A673 (cell line): ENCODE measurements at regions of chr2 and their contacts with region 1.

Region 1: GRCh38 chr2:11778923-11779757 is 32.7 kb downstream of the LPIN1 start:
- DNase-seq: peak; percentile 88
- H3K4me3 ChIP-seq: no peak overlapping the region
- H3K27ac ChIP-seq: no peak overlapping the region
- H3K4me1 ChIP-seq: peaks cover 12% of the 10 kb centered on the region
- H3K27me3 ChIP-seq: no peaks in the 10 kb centered on the region
- CTCF ChIP-seq: peak; percentile 95

Region 2: GRCh38 chr2:11310212-11310611 is 468.9 kb before region 1 on chr2:
- CTCF ChIA-PET with region 1: no interaction called
- POLR2A ChIA-PET with region 1: interaction called, 11 read pairs
- intact Hi-C with region 1: no loop called
- DNase-seq: no peak
- H3K4me3 ChIP-seq: no peak overlapping the region
- H3K27ac ChIP-seq: no peak overlapping the region
- H3K4me1 ChIP-seq: peaks cover 26% of the 10 kb centered on the region
- H3K27me3 ChIP-seq: no peaks in the 10 kb centered on the region
- CTCF ChIP-seq: no peak

Region 3: GRCh38 chr2:11477994-11478393 is 301.1 kb before region 1 on chr2:
- CTCF ChIA-PET with region 1: no interaction called
- POLR2A ChIA-PET with region 1: no interaction called
- intact Hi-C with region 1: loop called (anchors 5 kb)
- DNase-seq: peak; percentile 86
- H3K4me3 ChIP-seq: no peak overlapping the region
- H3K27ac ChIP-seq: no peak overlapping the region
- H3K4me1 ChIP-seq: peaks cover 4% of the 10 kb centered on the region
- H3K27me3 ChIP-seq: peaks cover 5% of the 10 kb centered on the region
- CTCF ChIP-seq: peak; percentile 89

Region 4: DNA sequence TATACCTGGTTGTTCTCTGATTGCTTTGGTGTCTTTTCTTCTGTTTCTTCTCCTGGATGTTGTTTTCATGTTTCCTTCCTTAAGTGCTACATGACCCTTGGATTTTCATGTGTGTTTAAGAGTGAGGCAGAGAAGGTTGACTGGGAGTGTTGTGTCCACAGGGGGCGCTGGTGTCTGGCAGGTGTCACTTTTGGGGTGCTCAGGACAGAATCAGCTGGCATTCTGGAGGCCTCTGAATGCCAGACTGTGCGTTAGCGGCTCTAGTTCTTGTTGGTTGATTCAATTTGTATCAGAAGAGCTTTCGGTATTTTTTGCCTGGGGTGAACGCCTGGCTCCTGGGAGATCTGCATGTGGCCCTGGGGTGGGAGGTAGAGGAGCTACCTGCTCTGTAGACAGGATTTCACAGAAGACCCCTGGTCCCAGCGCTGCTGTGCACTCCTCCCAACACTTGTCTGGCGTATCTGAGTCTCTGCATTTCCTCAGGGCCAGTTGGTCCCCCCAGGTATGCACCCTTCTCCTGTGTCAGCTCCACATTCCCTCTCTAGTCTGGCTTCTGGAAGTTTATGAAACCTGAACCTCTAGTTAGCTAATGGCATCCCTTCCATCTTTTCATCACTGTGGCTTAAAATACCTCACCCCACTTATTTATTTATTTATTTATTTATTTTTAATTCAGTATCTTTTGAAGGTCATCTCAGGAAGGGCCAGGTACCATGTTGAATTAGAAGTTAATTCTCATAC is 244.2 kb before region 1 on chr2:
- CTCF ChIA-PET with region 1: no interaction called
- POLR2A ChIA-PET with region 1: no interaction called
- intact Hi-C with region 1: no loop called
- DNase-seq: no peak
- H3K4me3 ChIP-seq: no peak overlapping the region
- H3K27ac ChIP-seq: no peak overlapping the region
- H3K4me1 ChIP-seq: no peaks in the 10 kb centered on the region
- H3K27me3 ChIP-seq: no peaks in the 10 kb centered on the region
- CTCF ChIP-seq: peak; percentile 58

Region 5: DNA sequence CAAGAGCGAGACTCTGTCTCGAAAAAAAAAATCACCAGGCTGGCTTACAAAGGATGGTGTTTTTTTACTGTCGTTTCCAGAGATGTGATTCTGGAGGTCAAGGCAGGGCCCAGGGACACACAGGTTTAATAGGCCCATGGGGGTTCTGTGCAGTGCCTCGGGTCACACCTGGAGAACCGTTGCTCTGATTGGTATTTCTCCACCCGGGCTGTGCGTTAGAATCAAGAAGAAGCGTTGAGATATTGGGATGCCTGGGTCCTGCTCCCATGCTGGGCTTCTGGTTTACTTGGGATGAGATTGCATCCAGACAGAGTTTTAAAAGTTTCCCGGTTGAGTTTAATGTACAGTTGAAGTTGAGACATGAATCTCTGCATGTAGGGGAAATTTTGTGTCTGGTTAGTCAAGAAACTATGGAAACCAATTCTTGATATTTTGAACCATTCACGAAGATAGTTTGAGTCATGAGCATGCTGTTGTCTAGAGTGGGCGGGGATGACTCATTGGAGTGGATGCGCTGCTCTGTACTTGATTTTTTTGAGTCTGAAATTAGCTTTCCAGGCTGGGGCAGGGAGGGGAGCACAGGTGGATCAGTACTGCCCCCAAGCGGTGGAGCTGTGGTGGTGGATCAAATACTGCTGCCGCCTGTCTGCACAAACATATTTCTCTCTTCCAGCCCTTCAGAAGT is 195.2 kb before region 1 on chr2:
- CTCF ChIA-PET with region 1: no interaction called
- POLR2A ChIA-PET with region 1: no interaction called
- intact Hi-C with region 1: loop called (anchors 1 kb)
- DNase-seq: peak; percentile 93
- H3K4me3 ChIP-seq: no peak overlapping the region
- H3K27ac ChIP-seq: no peak overlapping the region
- H3K4me1 ChIP-seq: peaks cover 13% of the 10 kb centered on the region
- H3K27me3 ChIP-seq: no peaks in the 10 kb centered on the region
- CTCF ChIP-seq: peak; percentile 94

Region 6: GRCh38 chr2:11688222-11689069 is 90.7 kb before region 1 on chr2:
- CTCF ChIA-PET with region 1: interaction called, 9 read pairs
- POLR2A ChIA-PET with region 1: no interaction called
- intact Hi-C with region 1: loop called (anchors 2 kb)
- DNase-seq: peak; percentile 90
- H3K4me3 ChIP-seq: peak overlapping the region; percentile 25
- H3K27ac ChIP-seq: no peak overlapping the region
- H3K4me1 ChIP-seq: peaks cover 6% of the 10 kb centered on the region
- H3K27me3 ChIP-seq: peaks cover 14% of the 10 kb centered on the region
- CTCF ChIP-seq: peak; percentile 97

Region 7: DNA sequence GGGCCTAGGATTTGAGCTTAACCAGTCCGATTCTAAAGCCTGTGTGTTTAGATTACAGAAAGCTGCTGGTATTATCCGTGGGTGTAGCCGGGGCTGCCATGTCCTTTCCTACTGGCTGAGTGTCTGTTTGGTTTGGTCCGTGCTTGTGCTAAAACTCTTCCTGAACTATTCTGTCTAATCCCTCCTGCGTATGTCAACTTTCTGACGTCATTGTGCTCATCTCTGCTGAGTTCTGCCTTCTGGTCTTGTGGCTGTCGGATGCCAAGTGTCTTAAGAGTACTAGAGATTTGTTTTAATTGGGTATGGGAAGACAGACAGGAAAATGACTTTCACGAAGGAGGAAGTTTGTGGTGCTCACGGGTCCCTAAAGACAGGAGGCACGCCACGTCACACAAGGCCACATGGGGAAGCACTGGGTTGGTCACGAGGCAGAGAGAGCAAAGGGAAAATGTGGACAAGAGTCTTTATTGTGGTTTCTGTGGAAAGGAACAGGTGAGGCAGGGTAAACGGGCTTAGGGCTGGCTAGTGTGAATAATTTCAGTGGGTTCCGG is 77.3 kb before region 1 on chr2:
- CTCF ChIA-PET with region 1: no interaction called
- POLR2A ChIA-PET with region 1: no interaction called
- intact Hi-C with region 1: no loop called
- DNase-seq: no peak
- H3K4me3 ChIP-seq: no peak overlapping the region
- H3K27ac ChIP-seq: no peak overlapping the region
- H3K4me1 ChIP-seq: no peaks in the 10 kb centered on the region
- H3K27me3 ChIP-seq: no peaks in the 10 kb centered on the region
- CTCF ChIP-seq: no peak

Region 8: DNA sequence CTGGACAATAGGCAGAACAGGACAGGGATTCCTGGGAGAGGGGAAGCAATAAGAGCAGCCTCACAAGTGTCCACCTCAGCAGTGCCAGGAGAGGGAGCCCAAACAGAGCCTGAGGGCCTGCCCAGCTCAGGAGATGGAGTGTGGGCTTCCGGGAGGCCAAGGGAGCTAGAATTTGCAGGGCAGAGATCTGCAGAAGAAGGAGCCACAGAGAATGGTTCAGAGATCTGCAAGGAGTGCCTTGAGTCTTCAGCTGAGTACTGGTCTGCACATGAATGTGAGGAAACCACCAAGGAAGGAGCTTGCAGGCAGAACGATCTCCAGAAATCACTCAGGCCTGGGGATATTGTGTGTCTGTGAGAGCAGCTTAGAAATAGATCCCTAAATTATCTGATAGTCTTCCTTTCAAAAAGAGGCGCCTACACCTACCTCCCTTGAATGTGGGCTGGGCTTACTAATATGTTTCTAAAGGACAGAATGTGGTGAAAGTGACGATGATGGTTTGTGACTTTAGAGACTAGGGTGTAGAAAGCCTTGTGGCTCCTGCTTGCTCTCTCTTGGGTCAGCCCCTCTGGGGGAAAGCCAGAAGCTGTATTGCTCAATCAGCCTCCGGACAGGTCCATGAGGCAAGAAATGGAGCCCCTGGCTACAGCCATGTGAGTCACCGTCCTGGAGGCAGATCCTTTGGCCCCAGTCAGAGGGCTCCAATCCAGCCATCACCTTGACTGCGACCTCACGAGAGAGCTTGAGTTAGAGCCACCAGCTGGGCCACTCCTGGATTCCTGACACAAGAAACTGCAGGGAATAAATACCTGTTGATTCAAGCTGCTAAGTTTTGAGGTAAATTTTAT is 40.3 kb before region 1 on chr2:
- CTCF ChIA-PET with region 1: interaction called, 4 read pairs
- POLR2A ChIA-PET with region 1: no interaction called
- intact Hi-C with region 1: loop called (anchors 1 kb)
- DNase-seq: peak; percentile 60
- H3K4me3 ChIP-seq: no peak overlapping the region
- H3K27ac ChIP-seq: no peak overlapping the region
- H3K4me1 ChIP-seq: peaks cover 6% of the 10 kb centered on the region
- H3K27me3 ChIP-seq: no peaks in the 10 kb centered on the region
- CTCF ChIP-seq: peak; percentile 52

Region 9: DNA sequence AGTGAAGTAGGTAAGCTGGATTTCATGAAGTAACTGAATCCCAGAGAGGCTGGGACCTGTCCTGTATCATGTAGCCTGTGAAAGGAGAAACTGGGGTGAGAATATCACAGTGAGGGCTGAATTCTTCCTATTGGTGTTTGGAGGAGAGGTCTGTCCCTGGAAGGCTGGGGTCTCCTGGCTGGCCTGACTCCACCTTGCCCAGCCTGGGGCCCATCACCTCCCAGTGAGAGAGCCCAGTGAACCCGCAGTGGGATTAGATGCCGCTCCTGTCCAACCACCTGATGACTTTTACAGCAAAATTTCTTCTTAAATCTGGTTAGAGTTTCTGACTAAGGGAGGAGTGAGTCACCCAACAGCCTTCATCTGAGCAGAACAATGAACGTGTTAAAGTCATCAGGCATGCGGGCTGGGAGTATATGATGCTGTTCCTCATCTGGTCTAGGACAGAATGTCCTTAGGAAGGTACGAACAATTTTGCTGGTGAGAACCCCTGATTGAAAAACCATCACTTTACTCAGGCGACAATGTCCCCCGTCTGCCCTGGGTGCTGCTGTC is 120.2 kb after region 1 on chr2:
- CTCF ChIA-PET with region 1: no interaction called
- POLR2A ChIA-PET with region 1: no interaction called
- intact Hi-C with region 1: no loop called
- DNase-seq: no peak
- H3K4me3 ChIP-seq: no peak overlapping the region
- H3K27ac ChIP-seq: no peak overlapping the region
- H3K4me1 ChIP-seq: no peaks in the 10 kb centered on the region
- H3K27me3 ChIP-seq: no peaks in the 10 kb centered on the region
- CTCF ChIP-seq: no peak